AG04450 (cell line): ENCODE measurements at regions of chr12 and their contacts with region 1.

Region 1: DNA sequence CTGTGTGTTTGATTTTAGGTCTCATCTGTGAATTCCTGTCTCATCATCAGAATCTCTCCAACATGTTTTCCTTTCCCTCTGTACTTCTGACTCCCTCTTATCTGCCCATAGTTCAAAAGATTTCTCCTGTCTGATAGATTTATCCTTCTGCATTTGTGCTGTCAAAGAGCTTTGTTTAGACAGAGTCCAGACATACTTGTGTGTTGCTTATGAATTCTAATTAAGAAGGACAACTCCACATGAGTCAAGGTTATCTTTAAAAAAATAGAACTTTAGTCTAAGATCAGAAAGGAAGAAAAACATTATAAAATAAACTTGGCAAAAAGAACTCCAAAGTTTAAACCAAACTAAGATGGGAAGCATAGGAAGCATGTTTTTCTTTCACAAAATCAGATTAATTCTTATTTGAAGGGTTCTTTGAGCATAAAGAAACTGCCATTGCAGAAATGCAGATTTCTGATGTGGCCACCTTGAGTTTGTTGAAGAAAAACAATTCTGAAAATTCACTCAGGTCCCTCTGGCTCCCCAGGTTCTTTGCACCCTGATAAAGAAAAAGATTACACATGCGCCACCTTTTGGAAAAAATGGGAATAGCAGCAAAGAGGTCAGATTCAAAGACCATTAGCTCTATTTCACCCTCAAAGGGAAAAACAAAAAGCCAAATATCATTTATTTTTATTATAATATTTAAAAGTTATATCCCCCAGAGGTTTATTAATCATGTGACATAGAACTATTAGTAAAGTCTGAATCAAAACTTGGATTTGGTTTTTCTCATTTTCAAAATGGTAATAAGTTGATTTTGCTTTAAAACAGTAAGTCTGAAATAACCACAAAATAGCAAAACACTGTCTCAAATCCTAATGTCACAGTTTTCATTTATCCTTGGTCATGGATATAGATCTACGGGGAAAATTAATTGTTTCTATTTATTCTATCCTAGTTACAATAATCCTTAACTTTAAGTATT is 143.7 kb upstream of the DCN start:
- DNase-seq: peak; percentile 55
- H3K4me3 ChIP-seq: no peak overlapping the region; the same call in 1 of the 2 replicates
- H3K27ac ChIP-seq: no peak overlapping the region
- H3K27me3 ChIP-seq: no peaks in the 10 kb centered on the region
- CTCF ChIP-seq: peak; percentile 91

Region 2: GRCh38 chr12:91211866-91212265 is 114.5 kb before region 1 on chr12:
- CTCF ChIA-PET with region 1: interaction called, 4 read pairs
- POLR2A ChIA-PET with region 1: interaction called, 11 read pairs
- DNase-seq: no peak
- H3K4me3 ChIP-seq: no peak overlapping the region
- H3K27ac ChIP-seq: no peak overlapping the region
- H3K27me3 ChIP-seq: no peaks in the 10 kb centered on the region
- CTCF ChIP-seq: no peak